Activated CD4-positive, alpha-beta memory T cell treated with anti-CD3 and anti-CD28 coated beads, Interleukin-2, amount 10 ng/mL, durations not matched to agents 7 days and 5 days (primary cell): ENCODE measurements at regions of chr22 and their contacts with region 1.

Region 1: GRCh38 chr22:36506637-36507517 is at the start of gene FOXRED2:
- DNase-seq: peak; percentile 93
- H3K4me3 Mint-ChIP-seq: peak within 1 kb of the TSS; percentile 67
- H3K27ac Mint-ChIP-seq: no peak within 1 kb of the TSS
- H3K4me1 Mint-ChIP-seq: peaks cover 23% of the 10 kb centered on the region
- H3K27me3 Mint-ChIP-seq: no peaks in the 10 kb centered on the region
- total RNA-seq, gene FOXRED2: 10.1 to 12.9 TPM

Region 2: GRCh38 chr22:36481393-36482168 is 25.3 kb before region 1 on chr22 and contains the start of gene TXN2:
- CTCF ChIA-PET with region 1: interaction called, 7 read pairs
- POLR2A ChIA-PET with region 1: interaction called, 10 read pairs
- DNase-seq: peak; percentile 96
- H3K4me3 Mint-ChIP-seq: peak within 1 kb of the TSS; percentile 100
- H3K27ac Mint-ChIP-seq: peak within 1 kb of the TSS; percentile 96
- H3K4me1 Mint-ChIP-seq: peaks cover 20% of the 10 kb centered on the region
- H3K27me3 Mint-ChIP-seq: no peaks in the 10 kb centered on the region
- total RNA-seq, gene TXN2: 72.3 to 73.2 TPM

Region 3: DNA sequence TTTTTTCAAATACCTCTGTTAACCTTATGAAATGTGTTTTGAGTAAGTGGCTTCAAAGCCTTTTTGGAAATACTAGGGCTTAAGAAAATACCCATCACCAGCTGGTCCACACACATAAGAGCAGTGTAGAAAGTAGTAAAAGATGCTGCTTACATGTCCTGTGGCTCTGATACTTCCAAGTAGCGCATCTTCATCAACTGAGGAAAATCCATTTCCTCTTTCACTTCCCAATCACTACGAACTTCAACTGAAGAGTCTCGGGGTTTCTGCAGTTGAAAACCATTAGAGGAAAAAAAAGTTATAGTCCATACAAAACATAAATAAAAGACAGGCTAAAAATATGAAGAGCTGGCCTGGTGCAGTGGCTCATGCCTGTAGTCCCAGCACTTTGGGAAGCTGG is 13.5 kb after region 1 on chr22:
- CTCF ChIA-PET with region 1: interaction called, 22 read pairs
- POLR2A ChIA-PET with region 1: interaction called, 17 read pairs
- DNase-seq: no peak
- H3K4me3 Mint-ChIP-seq: no peak overlapping the region
- H3K27ac Mint-ChIP-seq: no peak overlapping the region
- H3K4me1 Mint-ChIP-seq: no peaks in the 10 kb centered on the region
- H3K27me3 Mint-ChIP-seq: no peaks in the 10 kb centered on the region

Region 4: DNA sequence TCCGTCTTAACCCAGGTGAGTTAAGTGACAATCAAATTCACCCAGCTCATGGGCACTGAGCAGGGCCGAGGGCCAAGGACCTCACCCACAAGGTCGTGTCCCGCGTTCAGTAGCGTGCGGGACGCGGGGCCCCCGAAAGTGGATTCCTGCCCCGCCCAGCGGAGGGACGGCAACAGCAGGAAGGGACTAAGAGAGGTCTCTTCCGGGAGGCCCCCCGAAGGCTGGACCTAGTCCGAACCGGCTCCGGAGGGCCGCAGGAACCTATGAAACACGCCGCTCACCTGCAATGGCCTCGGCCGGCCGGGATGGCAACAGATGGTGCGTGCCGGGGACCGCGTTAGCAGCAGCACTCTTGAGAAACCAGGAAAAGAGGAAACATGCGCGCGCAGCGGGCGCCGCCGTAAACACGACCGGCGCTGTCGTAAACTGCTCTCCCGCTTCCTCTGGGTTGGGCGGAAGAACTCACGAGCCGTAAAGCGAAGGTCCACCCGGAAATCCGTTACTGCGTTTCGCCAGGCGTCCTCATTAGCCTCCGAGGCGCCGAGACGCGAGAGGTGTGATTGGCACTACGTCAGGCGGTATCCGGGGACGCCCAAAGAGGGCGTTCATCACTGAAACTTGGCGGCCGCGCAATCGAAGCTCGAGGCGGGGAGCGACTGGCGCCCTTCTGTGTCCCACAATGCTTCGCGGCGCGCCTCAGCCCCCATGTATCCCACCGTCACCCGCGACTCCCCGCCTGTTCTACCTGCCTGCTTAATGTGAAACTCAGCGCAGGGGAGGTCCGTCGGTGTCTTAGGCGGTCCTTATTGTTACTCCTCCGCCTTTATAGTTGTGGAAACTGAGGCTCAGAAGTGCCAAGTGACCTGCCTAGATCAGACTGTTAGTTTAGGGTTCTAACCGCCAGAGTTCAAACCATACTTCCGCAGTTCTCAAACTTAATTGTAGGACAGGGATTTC is 22.2 kb after region 1 on chr22 and contains the start of gene EIF3D:
- CTCF ChIA-PET with region 1: interaction called, 8 read pairs
- POLR2A ChIA-PET with region 1: interaction called, 66 read pairs
- DNase-seq: peak; percentile 99
- H3K4me3 Mint-ChIP-seq: peak within 1 kb of the TSS; percentile 93
- H3K27ac Mint-ChIP-seq: peak within 1 kb of the TSS; percentile 99
- H3K4me1 Mint-ChIP-seq: peaks cover 30% of the 10 kb centered on the region
- H3K27me3 Mint-ChIP-seq: peaks cover 3% of the 10 kb centered on the region
- total RNA-seq, gene EIF3D: 189 to 196 TPM